ENCODE measurements at regions of chr2 and their contacts with region 1.

Region 1: DNA sequence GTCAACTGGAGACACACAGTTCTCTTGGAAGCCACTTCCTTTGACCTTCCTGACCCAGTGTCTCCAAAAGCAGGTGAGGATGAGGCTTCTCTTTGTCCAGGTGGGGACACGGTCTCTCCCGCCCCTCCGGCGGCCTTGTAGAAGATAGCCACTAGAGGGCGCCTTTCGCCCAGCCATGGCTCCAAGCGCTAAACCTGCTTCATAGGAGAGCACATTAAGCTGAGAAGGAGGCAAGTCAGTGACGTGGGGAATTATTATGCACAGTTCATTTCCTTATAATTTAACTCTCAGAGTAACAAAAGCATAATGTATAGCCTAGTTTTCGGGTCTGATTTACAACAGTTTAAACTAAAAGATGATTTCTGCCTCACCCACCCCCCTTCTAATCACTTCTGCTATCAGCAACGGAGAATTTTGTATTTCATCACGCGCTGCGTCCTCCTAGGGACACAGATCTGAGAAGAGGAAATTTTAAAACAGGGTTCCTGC is 208.7 kb downstream of the ICOS start:
- DNase-seq: peak; percentile 87
- ATAC-seq: peak; percentile 99
- H3K4me3 Mint-ChIP-seq: peak overlapping the region; percentile 78
- H3K27ac Mint-ChIP-seq: peak overlapping the region; percentile 79
- H3K4me1 Mint-ChIP-seq: peaks cover 7% of the 10 kb centered on the region
- H3K27me3 Mint-ChIP-seq: peaks cover 21% of the 10 kb centered on the region

Region 2: DNA sequence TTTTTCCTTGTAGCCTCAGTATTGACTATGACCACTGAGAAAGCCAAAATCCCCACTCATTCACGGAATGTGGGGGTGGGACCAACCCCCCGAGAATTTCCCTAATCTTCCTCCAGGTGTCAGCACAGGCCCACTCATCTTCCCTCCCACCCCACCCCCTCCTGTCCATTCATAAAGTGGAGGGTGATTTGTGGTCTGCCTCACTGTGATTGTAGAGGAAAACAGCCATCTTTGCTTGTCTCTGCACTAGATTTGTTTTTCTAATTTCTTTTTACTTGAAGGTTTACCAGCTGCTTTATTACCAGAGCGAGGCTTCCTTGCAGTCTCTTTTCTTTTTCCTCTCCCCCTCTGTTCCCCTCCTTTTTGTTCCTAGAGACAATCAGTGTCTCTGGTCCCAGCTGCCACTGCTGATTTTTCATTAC is 37.0 kb before region 1 on chr2:
- CTCF ChIA-PET with region 1: interaction called, 38 read pairs
- POLR2A ChIA-PET with region 1: no interaction called
- DNase-seq: peak; percentile 69
- ATAC-seq: peak; percentile 52
- H3K4me3 Mint-ChIP-seq: peak overlapping the region; percentile 45
- H3K27ac Mint-ChIP-seq: peak overlapping the region; percentile 75
- H3K4me1 Mint-ChIP-seq: peaks cover 52% of the 10 kb centered on the region
- H3K27me3 Mint-ChIP-seq: peaks cover 17% of the 10 kb centered on the region

Region 3: GRCh38 chr2:204159526-204159925 is 14.2 kb after region 1 on chr2:
- CTCF ChIA-PET with region 1: interaction called, 16 read pairs
- POLR2A ChIA-PET with region 1: no interaction called
- DNase-seq: no peak
- ATAC-seq: no peak
- H3K4me3 Mint-ChIP-seq: no peak overlapping the region
- H3K27ac Mint-ChIP-seq: no peak overlapping the region
- H3K4me1 Mint-ChIP-seq: no peaks in the 10 kb centered on the region
- H3K27me3 Mint-ChIP-seq: peaks cover 7% of the 10 kb centered on the region

Region 4: DNA sequence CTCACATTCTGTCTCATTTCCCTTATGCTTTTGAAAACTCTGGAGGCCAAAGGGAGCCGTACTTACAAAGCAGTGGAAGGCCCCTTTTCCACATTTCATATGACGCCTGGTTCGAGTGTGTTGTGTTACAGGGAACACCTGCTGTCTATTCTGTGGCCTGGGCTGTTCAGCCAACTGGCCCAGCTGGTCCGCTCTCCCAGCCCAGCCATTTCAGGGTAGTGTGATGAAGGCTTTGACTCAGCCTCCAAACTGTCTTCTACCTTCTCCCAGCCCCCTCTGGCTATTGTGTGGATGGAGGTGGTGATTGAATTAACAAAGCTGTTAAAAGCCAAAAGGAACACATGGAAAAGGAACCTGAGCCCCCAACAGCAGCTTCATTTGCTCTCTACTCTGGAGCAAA is 25.1 kb after region 1 on chr2:
- CTCF ChIA-PET with region 1: interaction called, 65 read pairs
- POLR2A ChIA-PET with region 1: no interaction called
- DNase-seq: no peak
- ATAC-seq: no peak
- H3K4me3 Mint-ChIP-seq: no peak overlapping the region
- H3K27ac Mint-ChIP-seq: no peak overlapping the region
- H3K4me1 Mint-ChIP-seq: no peaks in the 10 kb centered on the region
- H3K27me3 Mint-ChIP-seq: peaks cover 7% of the 10 kb centered on the region

Region 5: GRCh38 chr2:204260162-204260877 is 115.0 kb after region 1 on chr2:
- CTCF ChIA-PET with region 1: interaction called, 18 read pairs
- POLR2A ChIA-PET with region 1: no interaction called
- DNase-seq: peak; percentile 57
- ATAC-seq: peak; percentile 60
- H3K4me3 Mint-ChIP-seq: no peak overlapping the region
- H3K27ac Mint-ChIP-seq: no peak overlapping the region
- H3K4me1 Mint-ChIP-seq: no peaks in the 10 kb centered on the region
- H3K27me3 Mint-ChIP-seq: peaks cover 45% of the 10 kb centered on the region

Measured in activated CD8-positive, alpha-beta T cell treated with anti-CD3 and anti-CD28 coated beads, Interleukin-2, amount 10 ng/mL, durations not matched to agents 7 days and 5 days (primary cell).